Endothelial cell of umbilical vein (primary cell): ENCODE measurements at regions of chr5 and their contacts with region 1.

Region 1: DNA sequence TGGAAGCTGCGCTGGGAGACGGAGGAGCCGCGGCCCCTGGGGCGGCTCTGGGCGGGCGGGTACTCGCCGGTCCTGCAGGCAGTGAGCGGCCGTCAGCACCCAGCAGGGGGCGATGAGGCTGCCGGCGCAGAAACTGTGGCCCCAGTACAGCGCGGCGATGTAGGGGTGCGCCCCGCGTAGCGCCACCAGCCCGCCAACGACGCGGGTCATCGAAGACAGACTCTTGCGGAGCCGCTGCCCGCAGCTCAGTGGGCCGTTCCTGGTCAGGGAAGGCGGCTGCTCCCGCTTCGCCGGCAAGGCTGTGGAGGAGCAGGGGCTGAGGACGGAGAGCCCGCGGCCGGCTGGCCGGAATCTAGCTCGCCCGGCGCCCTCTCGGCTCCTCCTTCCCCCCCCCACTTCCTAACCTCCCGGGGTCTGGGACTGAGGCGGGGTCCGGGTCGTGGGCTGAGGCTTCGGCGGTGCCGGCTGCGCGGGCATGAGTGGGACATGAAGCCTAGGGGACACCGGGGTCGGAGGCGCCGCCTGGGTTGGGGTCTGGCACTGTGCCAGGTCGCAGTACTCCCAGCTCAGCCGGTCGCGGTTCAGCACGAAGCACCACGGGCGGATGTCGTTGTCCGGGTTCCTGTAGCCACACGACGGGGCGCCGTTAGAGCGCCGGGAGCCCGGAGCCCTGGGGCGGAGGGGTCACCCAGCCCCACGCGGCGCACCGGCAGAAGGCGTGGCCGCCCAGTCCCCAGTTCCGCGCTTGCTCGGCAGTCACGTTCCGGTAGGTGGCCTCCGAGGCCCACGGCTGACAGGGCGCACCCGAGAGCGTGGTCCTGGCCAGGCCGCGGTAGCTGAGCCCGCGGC is 3.6 kb upstream of the PFN3 start:
- DNase-seq: peak; percentile 73
- H3K4me3 ChIP-seq: peak overlapping the region; percentile 27 to 42 (median 34)
- H3K27ac ChIP-seq: no peak overlapping the region
- H3K4me1 ChIP-seq: peaks cover 23% of the 10 kb centered on the region
- H3K27me3 ChIP-seq: peaks cover 34 to 39% of the 10 kb centered on the region in 2 experiments
- CTCF ChIP-seq: peak; percentile 81 to 87
- POLR2A ChIP-seq: peak; percentile 41

Region 2: GRCh38 chr5:177317959-177318377 is 86.0 kb before region 1 on chr5:
- CTCF ChIA-PET with region 1: interaction called, 10 read pairs
- POLR2A ChIA-PET with region 1: no interaction called
- dilution Hi-C with region 1: no loop called
- intact Hi-C with region 1: loop called (anchors 1 kb)
- DNase-seq: peak; percentile 82
- H3K4me3 ChIP-seq: no peak overlapping the region
- H3K27ac ChIP-seq: no peak overlapping the region
- H3K4me1 ChIP-seq: peaks cover under 1% of the 10 kb centered on the region
- H3K27me3 ChIP-seq: no peaks in the 10 kb centered on the region
- CTCF ChIP-seq: peak; percentile 83 to 93
- POLR2A ChIP-seq: no peak

Region 3: DNA sequence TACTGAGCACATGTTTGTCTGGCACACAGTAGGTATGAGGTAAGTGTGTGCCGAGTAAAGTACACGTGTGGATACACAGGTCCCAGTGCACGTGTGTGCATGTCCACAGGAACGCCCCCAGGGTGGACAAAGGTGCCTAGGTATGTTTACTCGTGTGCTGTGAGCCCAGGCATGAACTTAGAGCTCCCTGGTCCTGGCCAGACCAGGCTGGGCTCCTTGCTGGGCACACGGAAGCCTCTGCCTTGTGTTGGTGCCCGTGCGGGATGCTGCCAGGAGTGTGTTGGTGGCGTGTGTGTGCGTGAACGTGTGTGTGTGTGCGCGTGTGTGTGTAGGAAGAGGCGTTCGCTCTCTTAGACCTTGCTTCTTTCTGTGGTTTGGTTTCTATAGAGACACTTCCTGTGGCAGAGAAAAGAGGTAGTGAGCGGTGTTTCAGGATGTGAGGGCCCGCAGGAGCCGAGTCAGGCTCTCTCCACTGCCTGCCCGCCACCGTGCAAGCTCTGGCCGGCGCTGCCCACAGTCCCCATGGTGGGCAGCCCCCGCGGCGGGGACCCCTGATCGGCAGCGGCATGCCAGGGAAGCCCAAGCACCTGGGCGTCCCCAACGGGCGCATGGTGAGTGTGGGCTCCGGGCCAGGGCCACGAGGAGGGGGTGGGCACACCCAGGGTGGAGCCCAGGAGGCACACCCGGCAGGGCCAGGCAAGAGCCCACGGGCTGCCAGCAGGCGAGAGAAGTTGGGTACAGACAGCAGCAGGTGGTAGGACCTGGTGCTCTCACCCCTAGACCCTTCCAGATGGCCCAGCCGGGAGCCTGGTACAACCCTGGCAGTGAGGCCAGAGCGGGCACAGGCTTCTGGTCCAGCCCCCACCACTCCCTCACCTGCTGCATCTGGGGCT is 46.3 kb before region 1 on chr5 and contains the start of gene RGS14:
- CTCF ChIA-PET with region 1: no interaction called
- POLR2A ChIA-PET with region 1: no interaction called
- dilution Hi-C with region 1: no loop called
- intact Hi-C with region 1: no loop called
- DNase-seq: peak; percentile 56
- H3K4me3 ChIP-seq: peak within 1 kb of the TSS in 1 of 3 experiments; percentile 16
- H3K27ac ChIP-seq: no peak within 1 kb of the TSS
- H3K4me1 ChIP-seq: peaks cover 15% of the 10 kb centered on the region
- H3K27me3 ChIP-seq: no peaks in the 10 kb centered on the region
- CTCF ChIP-seq: no peak
- POLR2A ChIP-seq: no peak
- total RNA-seq, gene RGS14: 4.3 and 4.8 TPM in 2 replicates

Region 4: DNA sequence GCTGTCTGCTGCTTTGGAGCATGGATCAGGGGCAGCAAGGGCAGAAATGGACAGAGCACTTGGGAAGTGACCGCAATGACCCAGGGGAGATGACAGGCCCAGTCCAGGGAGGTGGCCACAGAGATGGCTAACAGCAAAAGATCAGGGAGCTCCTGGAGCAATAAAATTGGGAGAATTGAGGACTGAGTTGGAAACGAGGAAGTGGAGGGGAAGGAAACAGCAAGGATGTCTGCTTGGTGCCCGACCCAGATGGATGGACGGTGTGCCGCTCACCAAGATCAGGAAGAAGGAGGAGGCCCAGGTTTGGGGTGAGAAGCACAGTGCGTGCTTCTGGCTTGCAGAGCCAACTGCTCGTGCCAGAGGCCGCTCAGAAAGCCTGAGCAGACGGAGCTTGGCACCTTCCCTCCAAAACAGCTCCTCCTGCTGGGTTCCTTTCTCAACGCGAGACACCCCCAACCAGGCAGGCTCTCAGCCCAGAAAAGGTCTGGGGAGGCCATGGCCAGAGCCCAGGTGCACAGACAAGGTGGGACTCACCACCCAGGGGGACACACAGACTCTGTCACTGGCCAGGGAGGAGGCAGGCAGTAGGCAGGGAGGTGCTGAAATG is 21.5 kb before region 1 on chr5:
- CTCF ChIA-PET with region 1: interaction called, 138 read pairs
- POLR2A ChIA-PET with region 1: interaction called, 4 read pairs
- dilution Hi-C with region 1: no loop called
- intact Hi-C with region 1: no loop called
- DNase-seq: peak; percentile 37
- H3K4me3 ChIP-seq: no peak overlapping the region
- H3K27ac ChIP-seq: no peak overlapping the region
- H3K4me1 ChIP-seq: no peaks in the 10 kb centered on the region
- H3K27me3 ChIP-seq: peaks cover 0 to 4% of the 10 kb centered on the region in 2 experiments
- CTCF ChIP-seq: peak in 1 of 2 donors; percentile 58
- POLR2A ChIP-seq: no peak

Region 5: DNA sequence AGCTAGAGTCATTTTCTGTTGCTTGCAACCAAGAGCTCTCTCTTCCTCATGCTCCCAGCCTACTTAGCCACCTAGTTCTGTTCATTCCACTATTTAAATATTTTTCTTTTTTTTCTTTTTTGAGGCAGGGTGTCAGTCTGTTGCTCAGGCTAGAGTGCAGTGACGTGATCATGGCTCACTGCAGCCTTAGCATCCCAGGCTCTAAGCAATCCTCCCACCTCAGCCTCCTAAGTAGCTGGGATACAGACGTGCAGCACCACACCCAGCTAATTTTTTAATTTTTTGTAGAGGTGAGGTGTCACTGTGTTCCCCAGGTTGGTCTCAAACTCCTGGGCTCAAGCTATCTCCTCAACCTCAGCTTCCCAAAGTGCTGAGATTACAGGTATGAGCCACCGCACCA is 10.5 kb after region 1 on chr5:
- CTCF ChIA-PET with region 1: interaction called, 21 read pairs
- POLR2A ChIA-PET with region 1: no interaction called
- dilution Hi-C with region 1: no loop called
- intact Hi-C with region 1: no loop called
- DNase-seq: no peak
- H3K4me3 ChIP-seq: no peak overlapping the region
- H3K27ac ChIP-seq: no peak overlapping the region
- H3K4me1 ChIP-seq: no peaks in the 10 kb centered on the region
- H3K27me3 ChIP-seq: peaks cover 0 to 5% of the 10 kb centered on the region in 2 experiments
- CTCF ChIP-seq: no peak
- POLR2A ChIP-seq: no peak

Region 6: GRCh38 chr5:177425801-177426565 is 22.0 kb after region 1 on chr5:
- CTCF ChIA-PET with region 1: interaction called, 43 read pairs
- POLR2A ChIA-PET with region 1: interaction called, 7 read pairs
- dilution Hi-C with region 1: no loop called
- intact Hi-C with region 1: loop called (anchors 1 kb)
- DNase-seq: peak; percentile 100
- H3K4me3 ChIP-seq: peak overlapping the region; percentile 40 to 52 (median 51)
- H3K27ac ChIP-seq: peak overlapping the region; percentile 61
- H3K4me1 ChIP-seq: peaks cover 14% of the 10 kb centered on the region
- H3K27me3 ChIP-seq: no peaks in the 10 kb centered on the region
- CTCF ChIP-seq: no peak
- POLR2A ChIP-seq: peak; percentile 56